SK-N-SH (cell line): ENCODE measurements at regions of chr11 and their contacts with region 1.

Region 1: DNA sequence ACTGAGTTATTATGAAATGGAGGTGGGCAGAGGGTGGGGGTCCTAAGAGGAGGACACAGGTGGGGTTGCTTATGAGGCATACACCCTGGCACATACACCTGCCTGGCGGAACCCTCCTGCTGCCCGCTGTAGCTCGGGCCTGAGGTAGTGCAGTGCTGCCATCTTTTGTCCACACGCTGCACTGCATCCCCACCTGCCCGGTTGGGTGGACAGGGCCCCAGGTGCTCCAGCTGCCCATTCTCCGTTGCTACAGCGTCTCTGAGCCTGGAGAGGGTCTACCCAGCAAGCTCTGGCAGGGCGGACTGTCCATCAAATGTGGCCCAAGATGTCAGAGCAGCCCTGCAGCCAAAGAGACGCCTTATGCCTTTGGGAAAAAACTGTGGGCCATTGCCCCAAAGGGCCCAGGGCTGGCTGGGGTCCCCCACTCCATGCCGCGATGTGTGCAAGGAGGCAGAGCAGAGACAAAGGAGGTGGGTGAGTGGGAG is 131.2 kb downstream of the BUD13 start:
- DNase-seq: peak; percentile 86
- H3K4me3 ChIP-seq: no peak overlapping the region
- H3K27ac ChIP-seq: peak overlapping the region in 1 of 2 experiments; percentile 76; a peak in 1 of 4 replicates
- H3K4me1 ChIP-seq: peaks cover 0 to 19% of the 10 kb centered on the region in 2 experiments; a peak in 1 of 4 replicates
- H3K27me3 ChIP-seq: no peaks in the 10 kb centered on the region; the same call in 1 of the 2 replicates
- CTCF ChIP-seq: peak; percentile 77
- EP300 ChIP-seq: no peak
- RAD21 ChIP-seq: peak; percentile 93

Region 2: DNA sequence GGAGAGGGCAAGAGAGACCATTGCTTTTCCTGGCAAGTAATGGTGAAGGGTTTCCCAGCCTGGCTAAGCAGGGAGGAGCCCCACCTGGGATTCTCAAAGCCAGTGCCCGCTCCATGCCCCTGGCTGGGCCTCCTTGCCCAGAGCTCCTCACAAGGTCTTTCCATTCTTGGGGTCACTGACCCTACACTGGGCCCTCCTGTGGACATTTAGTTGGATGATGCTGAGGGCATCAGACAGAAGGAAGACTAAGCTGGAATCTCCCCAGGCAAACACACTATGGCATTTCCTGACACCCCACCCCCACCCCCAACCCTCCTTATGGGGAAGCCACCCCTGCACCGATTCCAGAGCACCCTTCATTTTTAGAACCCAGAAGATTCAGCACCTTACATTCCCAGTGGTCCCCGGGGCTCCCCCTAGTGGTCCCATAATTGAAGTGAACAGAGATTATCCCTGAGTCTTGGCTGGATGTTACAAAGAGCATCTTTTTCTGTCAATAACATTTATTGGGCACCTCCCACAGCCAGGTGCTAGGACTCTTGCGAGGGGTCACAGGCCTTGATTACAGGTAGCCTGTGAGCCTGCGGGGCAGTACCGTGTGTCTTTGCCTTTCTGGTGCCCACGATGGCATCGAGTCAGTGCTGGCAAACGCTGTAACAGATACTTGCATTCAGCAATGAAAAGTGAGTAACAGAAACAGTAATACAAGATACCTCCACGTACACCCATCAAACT is 417.3 kb before region 1 on chr11:
- CTCF ChIA-PET with region 1: interaction called, 11 read pairs
- POLR2A ChIA-PET with region 1: no interaction called
- DNase-seq: peak; percentile 63
- H3K4me3 ChIP-seq: peak overlapping the region in 1 of 2 experiments; percentile 31; a peak in 1 of 4 replicates
- H3K27ac ChIP-seq: peak overlapping the region in 1 of 2 experiments; percentile 84; a peak in 2 of 4 replicates
- H3K4me1 ChIP-seq: peaks cover 0 to 40% of the 10 kb centered on the region in 2 experiments; a peak in 1 of 4 replicates
- H3K27me3 ChIP-seq: no peaks in the 10 kb centered on the region
- CTCF ChIP-seq: peak; percentile 79
- EP300 ChIP-seq: no peak
- RAD21 ChIP-seq: peak; percentile 65

Region 3: DNA sequence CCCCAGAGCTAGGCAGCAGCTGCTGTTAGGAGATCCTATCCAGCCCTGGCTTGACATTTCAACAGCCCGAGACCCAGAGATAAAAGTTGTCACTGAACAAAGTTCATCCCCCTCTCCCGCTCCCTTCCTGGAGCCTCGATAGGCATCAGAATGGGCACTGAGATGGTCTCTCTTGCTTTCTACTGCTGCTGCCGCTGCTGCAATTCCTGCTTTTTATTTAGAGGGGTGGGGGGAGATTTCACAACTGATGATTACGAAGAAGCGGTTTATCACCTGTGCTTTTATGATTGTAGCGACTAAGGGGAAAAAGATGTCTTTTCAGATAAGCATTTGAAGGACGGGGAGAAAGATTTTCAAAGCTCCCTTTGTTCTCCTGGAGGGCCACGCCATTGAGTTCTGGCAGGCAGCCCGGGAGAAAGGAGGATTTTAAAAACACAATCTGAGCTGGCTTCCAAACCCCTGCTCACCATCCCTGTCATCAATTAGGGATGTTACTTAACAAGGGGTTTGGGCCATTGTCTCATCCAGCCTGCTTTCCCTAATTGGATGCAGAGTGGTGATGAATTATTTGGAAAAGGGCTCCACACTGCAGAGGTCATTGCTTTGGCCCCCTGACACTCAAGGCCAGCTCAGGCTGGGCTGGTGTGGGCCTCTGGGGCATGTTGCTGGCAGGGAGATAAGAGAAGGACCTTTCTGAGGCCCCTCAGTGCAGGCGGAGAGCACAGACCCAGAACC is 213.5 kb before region 1 on chr11:
- CTCF ChIA-PET with region 1: interaction called, 22 read pairs
- POLR2A ChIA-PET with region 1: interaction called, 11 read pairs
- DNase-seq: peak; percentile 88
- H3K4me3 ChIP-seq: no peak overlapping the region; a peak in 1 of 4 replicates
- H3K27ac ChIP-seq: peak overlapping the region; percentile 32 to 100; a peak in 3 of 4 replicates
- H3K4me1 ChIP-seq: peaks cover 5 to 63% of the 10 kb centered on the region in 2 experiments; a peak in 3 of 4 replicates
- H3K27me3 ChIP-seq: no peaks in the 10 kb centered on the region
- CTCF ChIP-seq: no peak
- EP300 ChIP-seq: peak; percentile 27 to 97; a peak in 3 of 4 replicates
- RAD21 ChIP-seq: peak; percentile 50

Region 4: DNA sequence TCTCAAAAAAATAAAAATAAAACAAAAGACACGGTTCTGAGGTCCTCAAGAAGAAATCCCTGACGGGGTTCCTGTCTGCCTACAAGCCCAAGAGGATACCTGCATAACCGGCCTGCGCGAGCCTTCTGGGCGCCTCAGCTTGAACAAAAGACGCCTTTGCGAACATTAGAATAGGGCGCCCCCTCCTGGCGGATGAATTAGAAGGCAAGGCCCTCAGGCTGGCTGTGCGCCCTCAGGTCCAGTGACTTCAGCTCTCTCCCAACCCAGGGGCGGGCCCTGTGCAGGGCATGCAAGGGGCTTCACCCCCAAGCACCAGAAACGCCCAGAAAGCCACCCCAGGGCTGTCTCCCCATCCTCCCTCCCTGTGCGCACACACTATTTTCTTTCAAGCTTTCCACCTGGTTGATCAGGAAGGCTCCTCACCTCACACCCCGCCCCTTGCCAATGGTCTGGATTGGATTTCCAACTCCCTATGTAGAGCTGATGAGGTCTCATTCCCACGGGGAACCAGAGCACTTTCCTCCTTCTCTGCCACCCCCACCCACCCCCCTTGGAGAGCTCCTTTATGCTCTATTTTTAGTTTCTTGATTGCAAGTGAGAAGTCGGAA is 142.1 kb before region 1 on chr11:
- CTCF ChIA-PET with region 1: interaction called, 47 read pairs
- POLR2A ChIA-PET with region 1: interaction called, 27 read pairs
- DNase-seq: peak; percentile 67
- H3K4me3 ChIP-seq: no peak overlapping the region; a peak in 1 of 4 replicates
- H3K27ac ChIP-seq: peak overlapping the region in 1 of 2 experiments; percentile 97; a peak in 2 of 4 replicates
- H3K4me1 ChIP-seq: peaks cover 0 to 67% of the 10 kb centered on the region in 2 experiments; a peak in 2 of 4 replicates
- H3K27me3 ChIP-seq: peaks cover 12% of the 10 kb centered on the region; the same call in 1 of the 2 replicates
- CTCF ChIP-seq: peak; percentile 70
- EP300 ChIP-seq: no peak
- RAD21 ChIP-seq: peak; percentile 76

Region 5: DNA sequence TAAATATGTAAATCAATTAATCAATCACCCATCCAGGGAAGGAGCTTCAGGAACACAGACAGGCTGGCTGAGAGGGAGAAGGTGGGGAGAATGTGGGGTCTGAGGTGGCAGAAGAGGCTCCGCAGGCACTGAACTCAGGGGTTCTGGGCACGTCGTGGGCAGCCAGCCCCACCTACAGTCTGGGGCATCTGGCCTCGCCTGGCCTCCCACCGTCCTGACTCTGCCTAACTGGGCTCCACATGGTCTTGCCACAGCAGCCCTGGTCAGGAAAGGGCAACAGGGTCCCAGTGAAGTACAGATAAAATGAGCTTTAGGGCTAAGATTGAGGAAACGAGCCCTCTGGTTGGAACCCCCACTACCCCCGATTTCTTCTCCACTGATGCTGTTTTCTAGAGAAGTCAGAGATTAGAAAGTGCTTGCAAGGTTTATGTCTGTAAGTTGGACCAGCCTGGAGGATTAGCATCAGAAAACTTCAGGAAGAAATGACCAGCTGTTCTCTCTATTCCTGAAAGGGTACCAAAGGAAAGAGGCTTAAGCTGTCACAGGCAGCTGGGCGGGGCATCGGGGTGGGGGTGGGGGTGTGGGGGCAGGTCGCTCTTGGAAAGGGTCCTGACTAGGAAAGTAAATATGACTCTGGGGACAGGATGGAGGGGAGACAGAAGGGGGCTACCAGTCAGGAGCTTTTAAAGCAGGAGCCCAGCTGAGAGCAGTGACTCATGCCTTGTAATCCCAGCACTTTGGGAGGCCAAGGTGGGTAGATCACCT is 130.5 kb before region 1 on chr11:
- CTCF ChIA-PET with region 1: interaction called, 47 read pairs
- POLR2A ChIA-PET with region 1: interaction called, 27 read pairs
- DNase-seq: no peak
- H3K4me3 ChIP-seq: no peak overlapping the region
- H3K27ac ChIP-seq: peak overlapping the region in 1 of 2 experiments; percentile 97; a peak in 1 of 4 replicates
- H3K4me1 ChIP-seq: peaks cover 0 to 58% of the 10 kb centered on the region in 2 experiments; a peak in 2 of 4 replicates
- H3K27me3 ChIP-seq: peaks cover 14% of the 10 kb centered on the region; the same call in 1 of the 2 replicates
- CTCF ChIP-seq: no peak
- EP300 ChIP-seq: no peak
- RAD21 ChIP-seq: no peak

Region 6: DNA sequence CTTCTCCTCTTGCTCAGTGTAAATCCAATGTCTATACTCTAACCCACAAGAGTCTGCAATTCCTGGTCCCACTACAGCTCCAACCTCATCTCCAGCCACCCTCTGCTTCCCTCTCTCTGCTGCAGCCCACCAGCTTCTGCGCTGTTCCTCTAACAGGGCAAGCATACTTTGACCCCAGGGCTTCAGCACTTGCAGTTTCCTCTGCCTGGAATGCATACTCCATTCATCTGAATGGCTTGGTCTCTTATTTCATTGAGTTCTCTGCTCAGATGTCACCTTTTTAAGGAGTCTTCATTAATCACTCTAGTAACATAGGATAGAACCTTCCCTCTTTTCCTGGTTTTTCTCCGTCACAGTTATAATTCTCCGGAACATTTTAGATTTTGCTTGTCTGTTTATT is 10.4 kb before region 1 on chr11:
- CTCF ChIA-PET with region 1: interaction called, 11 read pairs
- POLR2A ChIA-PET with region 1: no interaction called
- DNase-seq: no peak
- H3K4me3 ChIP-seq: no peak overlapping the region
- H3K27ac ChIP-seq: no peak overlapping the region
- H3K4me1 ChIP-seq: peaks cover 0 to 3% of the 10 kb centered on the region in 2 experiments; a peak in 1 of 4 replicates
- H3K27me3 ChIP-seq: no peaks in the 10 kb centered on the region; the same call in 1 of the 2 replicates
- CTCF ChIP-seq: no peak
- EP300 ChIP-seq: no peak
- RAD21 ChIP-seq: no peak